A549 (cell line): ENCODE measurements at regions of chr2 and their contacts with region 1.

Region 1: GRCh38 chr2:70948337-70949003 is 12.8 kb downstream of the ATP6V1B1 start:
- DNase-seq: peak; percentile 77 to 79
- ATAC-seq: peak; percentile 94 to 98
- H3K4me3 ChIP-seq: peak overlapping the region; percentile 4
- H3K27ac ChIP-seq: peak overlapping the region; percentile 12 to 76; a peak in 5 of 6 replicates
- H3K4me1 ChIP-seq: peaks cover 13% of the 10 kb centered on the region; the same call in 2 of the 3 replicates
- CTCF ChIP-seq: peak; percentile 86
- EP300 ChIP-seq: no peak
- POLR2A ChIP-seq: peak; percentile 4; the same call in 1 of the 2 replicates
- RAD21 ChIP-seq: peak; percentile 56 to 57

Region 2: GRCh38 chr2:70656421-70657010 is 292.0 kb before region 1 on chr2:
- CTCF ChIA-PET with region 1: interaction called, 19 read pairs
- POLR2A ChIA-PET with region 1: no interaction called
- DNase-seq: no peak
- ATAC-seq: no peak
- H3K4me3 ChIP-seq: no peak overlapping the region
- H3K27ac ChIP-seq: no peak overlapping the region
- H3K4me1 ChIP-seq: no peaks in the 10 kb centered on the region
- CTCF ChIP-seq: no peak
- EP300 ChIP-seq: no peak
- POLR2A ChIP-seq: no peak
- RAD21 ChIP-seq: no peak

Region 3: DNA sequence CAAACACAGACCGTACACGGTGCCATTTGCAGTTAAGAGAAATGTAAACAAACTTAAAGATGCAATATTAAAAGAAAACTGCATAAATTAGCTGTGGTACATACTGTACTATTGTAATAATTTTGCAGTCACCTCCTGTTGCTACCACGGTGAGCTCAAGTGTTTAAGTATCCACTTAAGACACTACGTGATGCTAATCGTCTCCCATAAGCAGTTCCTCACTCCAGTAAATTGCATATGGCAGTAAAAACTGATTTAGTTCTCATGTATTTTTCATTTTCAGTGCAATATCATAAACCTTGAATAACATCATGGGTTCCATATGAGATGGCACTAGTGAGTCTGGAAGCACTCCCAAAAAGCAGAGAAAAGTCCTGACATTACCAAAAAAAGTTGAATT is 142.5 kb before region 1 on chr2:
- CTCF ChIA-PET with region 1: interaction called, 10 read pairs
- POLR2A ChIA-PET with region 1: no interaction called
- DNase-seq: no peak
- ATAC-seq: no peak
- H3K4me3 ChIP-seq: no peak overlapping the region
- H3K27ac ChIP-seq: no peak overlapping the region
- H3K4me1 ChIP-seq: no peaks in the 10 kb centered on the region
- CTCF ChIP-seq: no peak
- EP300 ChIP-seq: no peak
- POLR2A ChIP-seq: no peak
- RAD21 ChIP-seq: no peak

Region 4: DNA sequence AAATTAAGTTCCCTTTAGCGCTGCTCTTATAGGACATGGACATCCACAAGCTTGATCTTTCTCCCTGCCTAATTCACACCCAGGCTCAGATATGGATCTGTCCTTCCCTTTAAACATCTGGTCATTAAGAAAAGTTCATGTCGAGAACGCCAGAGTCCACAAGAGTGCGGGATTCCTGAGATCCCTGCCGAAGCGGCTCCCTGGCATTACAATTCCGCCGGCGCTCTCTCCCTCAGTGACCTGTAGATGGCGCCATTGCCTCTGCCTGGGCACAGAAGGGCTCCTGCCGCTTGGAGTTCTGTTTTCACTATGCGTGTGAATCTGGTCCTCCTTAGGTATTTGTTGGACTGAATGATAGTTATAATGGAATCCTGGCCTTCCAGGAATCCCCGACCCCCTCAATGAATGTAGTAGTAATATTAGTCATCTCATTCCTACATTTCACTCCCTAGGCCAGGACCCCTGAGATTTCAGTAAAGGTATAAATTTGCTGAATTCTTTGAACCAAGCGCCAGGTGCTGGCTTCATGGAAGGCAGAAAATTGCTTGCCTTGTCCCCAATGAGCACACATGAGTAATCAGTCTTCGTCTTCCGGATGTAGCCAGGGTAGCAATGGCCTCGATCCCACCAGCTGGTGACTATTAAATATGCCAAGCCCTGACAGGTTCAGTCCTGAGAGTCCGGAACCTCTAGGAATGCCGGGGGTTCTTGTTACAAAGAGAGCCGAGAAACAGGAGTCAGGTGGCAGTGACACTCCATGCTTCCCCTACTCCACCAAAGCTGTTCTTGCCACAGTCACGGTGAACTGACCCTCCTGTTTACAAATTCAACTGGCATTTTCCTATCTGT is 86.5 kb before region 1 on chr2:
- CTCF ChIA-PET with region 1: interaction called, 174 read pairs
- POLR2A ChIA-PET with region 1: no interaction called
- DNase-seq: peak; percentile 85 to 92
- ATAC-seq: peak; percentile 90 to 97
- H3K4me3 ChIP-seq: no peak overlapping the region
- H3K27ac ChIP-seq: no peak overlapping the region
- H3K4me1 ChIP-seq: peaks cover 3% of the 10 kb centered on the region; the same call in 1 of the 3 replicates
- CTCF ChIP-seq: peak; percentile 98
- EP300 ChIP-seq: no peak
- POLR2A ChIP-seq: no peak
- RAD21 ChIP-seq: peak; percentile 91 to 95

Region 5: DNA sequence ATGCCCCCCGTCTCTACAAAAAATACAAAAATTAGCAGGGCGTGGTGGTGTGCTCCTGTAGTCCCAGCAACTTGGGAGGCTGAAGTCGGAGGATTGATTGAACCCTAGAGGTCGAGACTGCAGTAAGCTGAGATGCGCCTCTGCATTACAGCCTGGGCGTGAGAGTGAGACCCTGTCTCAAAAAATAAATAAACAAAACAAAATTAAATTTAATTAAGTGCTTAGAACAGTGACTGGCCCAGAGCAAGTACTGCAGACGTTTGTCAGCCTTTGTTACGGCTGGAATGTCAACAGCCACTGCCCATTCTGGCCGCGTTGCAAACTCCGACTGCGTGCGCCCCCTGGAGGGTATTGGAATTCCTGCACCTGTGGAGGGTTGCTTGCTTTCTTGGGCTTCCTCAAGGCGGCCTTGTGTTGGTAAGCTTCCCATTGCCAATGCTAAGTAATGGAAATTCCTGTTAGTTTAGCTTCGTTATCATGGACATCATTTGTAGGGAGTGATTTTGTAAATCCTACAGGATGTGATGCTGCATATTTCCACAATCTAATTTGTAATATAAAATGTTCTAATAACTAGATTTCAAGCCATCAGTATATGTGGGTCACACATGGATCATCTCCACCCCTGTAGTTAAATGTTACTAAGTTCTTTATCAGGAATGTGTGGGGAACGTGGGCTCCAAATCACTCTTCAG is 28.7 kb before region 1 on chr2:
- CTCF ChIA-PET with region 1: interaction called, 512 read pairs
- POLR2A ChIA-PET with region 1: no interaction called
- DNase-seq: peak; percentile 77 to 87
- ATAC-seq: peak; percentile 90 to 95
- H3K4me3 ChIP-seq: no peak overlapping the region
- H3K27ac ChIP-seq: no peak overlapping the region
- H3K4me1 ChIP-seq: no peaks in the 10 kb centered on the region
- CTCF ChIP-seq: peak; percentile 97
- EP300 ChIP-seq: no peak
- POLR2A ChIP-seq: no peak
- RAD21 ChIP-seq: peak; percentile 81 to 89

Region 6: GRCh38 chr2:70984576-70985282 is 36.3 kb after region 1 on chr2:
- CTCF ChIA-PET with region 1: interaction called, 29 read pairs
- POLR2A ChIA-PET with region 1: no interaction called
- DNase-seq: peak; percentile 67 to 79
- ATAC-seq: peak; percentile 87 to 98
- H3K4me3 ChIP-seq: no peak overlapping the region
- H3K27ac ChIP-seq: no peak overlapping the region
- H3K4me1 ChIP-seq: no peaks in the 10 kb centered on the region
- CTCF ChIP-seq: peak; percentile 67
- EP300 ChIP-seq: no peak
- POLR2A ChIP-seq: no peak
- RAD21 ChIP-seq: peak in 1 of 2 experiments; percentile 20; a peak in 1 of 5 replicates